PC-9 (cell line): ENCODE measurements at regions of chr16 and their contacts with region 1.

Region 1: DNA sequence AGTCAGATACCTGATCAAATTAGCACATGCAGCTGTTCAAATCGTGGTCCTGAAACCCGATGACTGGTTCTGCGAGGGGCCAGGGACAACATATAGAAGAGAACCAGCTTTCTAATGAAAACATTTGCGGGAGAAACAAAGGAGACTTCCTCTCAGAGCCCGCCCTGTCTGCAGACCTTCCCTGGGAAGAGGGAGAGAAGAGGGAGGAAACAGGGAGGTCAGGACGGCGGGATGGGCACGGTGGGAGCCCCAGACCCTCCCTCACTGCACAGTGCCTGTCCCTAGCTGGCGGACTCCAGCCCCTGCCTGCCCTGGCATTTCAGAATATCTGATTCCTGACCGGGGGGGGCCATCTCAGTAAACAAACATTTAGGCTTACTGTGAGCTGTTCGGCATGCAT is 317.3 kb downstream of the FOXL1 start:
- DNase-seq: no peak
- H3K4me3 ChIP-seq: no peak overlapping the region
- H3K27ac ChIP-seq: no peak overlapping the region
- H3K4me1 ChIP-seq: no peaks in the 10 kb centered on the region
- H3K27me3 ChIP-seq: peaks cover 100% of the 10 kb centered on the region
- CTCF ChIP-seq: no peak

Region 2: DNA sequence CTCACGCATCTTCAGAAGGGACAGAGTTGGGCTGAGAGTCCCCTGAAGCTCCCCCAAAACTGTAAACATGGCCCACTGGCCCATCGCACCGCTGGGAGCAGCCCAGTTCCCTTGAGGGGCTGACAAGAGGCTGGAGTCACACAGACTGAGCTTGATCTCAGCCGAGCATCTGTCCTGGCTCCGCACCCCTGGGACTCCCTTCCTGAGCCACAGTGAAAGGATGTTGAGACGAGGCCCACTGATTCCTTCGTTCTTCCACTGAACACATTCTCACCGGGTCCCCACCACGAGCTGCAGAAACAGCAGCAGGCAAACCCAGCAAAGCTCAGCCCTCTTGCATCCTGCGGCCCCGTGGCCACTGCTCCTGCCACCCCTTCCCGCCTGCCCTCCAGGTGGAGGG is 1637.4 kb before region 1 on chr16:
- CTCF ChIA-PET with region 1: interaction called, 11 read pairs
- POLR2A ChIA-PET with region 1: no interaction called
- intact Hi-C with region 1: no loop called
- DNase-seq: no peak
- H3K4me3 ChIP-seq: no peak overlapping the region
- H3K27ac ChIP-seq: no peak overlapping the region
- H3K4me1 ChIP-seq: no peaks in the 10 kb centered on the region
- H3K27me3 ChIP-seq: no peaks in the 10 kb centered on the region
- CTCF ChIP-seq: no peak